ENCODE measurements at regions of chr19 and their contacts with region 1.

Region 1: DNA sequence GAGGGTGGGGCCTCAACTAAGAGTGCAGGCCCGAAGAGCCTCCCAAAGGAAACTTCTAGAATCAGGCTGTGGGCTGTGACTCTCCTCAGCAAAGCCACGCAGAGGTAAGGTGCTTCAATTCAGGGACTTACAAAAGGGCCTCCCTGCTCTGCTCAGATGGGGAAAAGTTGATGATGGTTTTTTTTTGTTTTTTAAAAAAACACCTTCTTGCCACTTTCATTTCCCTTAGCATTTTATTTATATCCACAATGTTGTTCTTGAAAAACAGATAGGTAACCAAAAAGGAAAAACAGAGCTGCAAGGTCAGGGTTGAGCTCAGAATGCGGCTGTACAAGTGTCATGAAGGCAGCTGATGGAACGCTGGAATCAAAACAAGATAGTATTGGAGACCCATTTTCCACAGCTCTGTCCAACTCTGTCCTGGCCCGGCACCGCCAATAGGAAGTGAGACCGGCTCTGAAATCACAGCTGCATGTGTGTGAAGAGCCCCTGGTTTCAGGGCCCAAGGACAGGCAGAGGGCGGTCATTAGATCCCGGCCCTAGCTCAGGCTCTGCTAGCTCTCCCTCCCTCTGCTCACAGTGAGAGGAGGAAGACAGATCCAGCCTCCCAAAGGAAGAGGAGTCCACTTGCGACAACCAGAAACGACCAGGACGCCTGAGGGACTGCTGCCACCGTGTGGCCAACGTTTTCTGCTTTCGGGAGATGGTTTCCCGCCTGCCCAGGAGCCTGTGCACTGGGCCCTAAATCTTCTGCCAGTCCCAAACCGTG is 58.3 kb downstream of the KLF2 start:
- DNase-seq: peak; percentile 87
- H3K4me3 ChIP-seq: no peak overlapping the region
- H3K27ac ChIP-seq: peak overlapping the region; percentile 71 to 86 (median 80)
- H3K4me1 ChIP-seq: peaks cover 7 to 25% (median 16%) of the 10 kb centered on the region in 4 donors
- H3K27me3 ChIP-seq: no peaks in the 10 kb centered on the region
- CTCF ChIP-seq: peak; percentile 75 to 86 (median 82)
- EP300 ChIP-seq: no peak
- POLR2A ChIP-seq: no peak

Region 2: GRCh38 chr19:16247353-16248182 is 135.4 kb before region 1 on chr19:
- in situ Hi-C with region 1: loop called (anchors 5 to 10 kb)
- intact Hi-C with region 1: loop called (anchors 2 kb)
- DNase-seq: peak; percentile 87
- H3K4me3 ChIP-seq: no peak overlapping the region
- H3K27ac ChIP-seq: no peak overlapping the region
- H3K4me1 ChIP-seq: peaks cover 0 to 2% (median 0%) of the 10 kb centered on the region in 4 donors
- H3K27me3 ChIP-seq: peaks cover 8% of the 10 kb centered on the region
- CTCF ChIP-seq: peak; percentile 91 to 97 (median 97)
- EP300 ChIP-seq: no peak
- POLR2A ChIP-seq: no peak

Region 3: DNA sequence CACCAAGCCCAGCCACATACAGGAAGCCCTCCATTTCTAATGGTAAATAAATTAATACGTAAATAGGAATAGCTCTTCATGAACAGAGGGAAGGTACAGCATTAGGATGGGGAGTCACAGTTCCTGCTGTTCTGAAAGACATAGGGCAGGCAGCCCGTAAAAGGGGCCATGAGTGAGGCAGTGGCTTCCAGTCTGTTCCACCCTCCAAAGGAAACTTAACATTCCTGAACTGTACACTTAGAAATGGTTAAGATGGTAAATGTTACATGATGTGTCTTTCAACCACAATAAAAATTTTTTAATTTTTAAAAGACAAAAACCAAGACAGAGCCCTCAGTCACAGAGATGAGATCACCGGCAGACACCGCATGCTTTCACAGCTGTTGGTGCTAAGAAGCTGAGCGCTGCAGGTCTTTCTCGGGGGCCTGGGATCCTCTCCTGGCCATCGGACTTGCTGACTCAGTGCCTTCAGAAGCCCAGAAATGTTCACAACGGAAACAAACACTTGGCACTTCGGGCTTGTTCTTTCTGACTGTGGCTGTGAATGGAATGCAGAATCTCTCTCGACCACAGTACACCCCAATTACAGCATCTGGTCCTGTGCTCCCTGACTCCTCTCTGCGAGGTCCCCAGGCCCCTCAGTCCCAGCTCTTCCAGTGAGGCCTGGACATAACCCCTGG is 52.4 kb after region 1 on chr19:
- in situ Hi-C with region 1: no loop called
- intact Hi-C with region 1: no loop called
- DNase-seq: peak; percentile 48
- H3K4me3 ChIP-seq: no peak overlapping the region
- H3K27ac ChIP-seq: peak overlapping the region; percentile 58 to 82 (median 75)
- H3K4me1 ChIP-seq: peaks cover 0 to 24% (median 8%) of the 10 kb centered on the region in 4 donors
- H3K27me3 ChIP-seq: no peaks in the 10 kb centered on the region
- CTCF ChIP-seq: no peak
- EP300 ChIP-seq: no peak
- POLR2A ChIP-seq: no peak

Measured in transverse colon (tissue), 4 donors.